PC-9 (cell line): ENCODE measurements at regions of chr4 and their contacts with region 1.

Region 1: GRCh38 chr4:75527482-75527881 is 13.2 kb downstream of the THAP6 start:
- DNase-seq: no peak
- H3K4me3 ChIP-seq: no peak overlapping the region
- H3K27ac ChIP-seq: no peak overlapping the region
- H3K4me1 ChIP-seq: no peaks in the 10 kb centered on the region
- H3K27me3 ChIP-seq: no peaks in the 10 kb centered on the region
- CTCF ChIP-seq: no peak

Region 2: DNA sequence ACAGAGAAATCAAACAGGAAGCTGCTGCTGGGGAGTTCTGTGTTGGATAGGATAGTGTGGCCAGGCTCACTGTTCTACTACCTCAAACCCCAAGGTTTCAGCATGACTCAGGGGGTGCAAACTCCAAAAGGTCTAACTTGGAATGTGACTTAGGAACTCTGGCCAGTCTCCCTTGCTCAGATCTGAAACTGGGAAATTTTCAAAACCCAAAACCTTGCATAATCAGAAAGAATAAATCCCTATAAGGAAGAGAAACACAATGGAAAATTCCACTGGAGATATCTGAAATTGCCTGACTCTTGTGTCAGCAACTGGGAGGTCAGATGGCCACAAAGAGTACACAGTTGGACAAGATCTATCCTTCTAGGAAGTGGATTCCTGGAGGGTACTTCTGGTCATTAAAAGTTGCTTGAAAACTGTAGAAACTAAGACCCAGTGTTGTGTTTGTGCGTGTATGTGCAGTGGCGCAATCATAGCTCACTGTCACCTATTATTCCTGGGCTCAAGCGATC is 316.7 kb after region 1 on chr4:
- CTCF ChIA-PET with region 1: no interaction called
- POLR2A ChIA-PET with region 1: interaction called, 13 read pairs
- intact Hi-C with region 1: no loop called
- DNase-seq: peak in 1 of 2 experiments; percentile 86
- H3K4me3 ChIP-seq: no peak overlapping the region
- H3K27ac ChIP-seq: peak overlapping the region; percentile 82
- H3K4me1 ChIP-seq: peaks cover 23% of the 10 kb centered on the region
- H3K27me3 ChIP-seq: no peaks in the 10 kb centered on the region
- CTCF ChIP-seq: no peak